B cell (primary cell): ENCODE measurements at regions of chr19 and their contacts with region 1.

Region 1: GRCh38 chr19:3746371-3747056 is 15.0 kb downstream of the APBA3 start:
- DNase-seq: no peak
- ATAC-seq: no peak
- H3K4me3 ChIP-seq: no peak overlapping the region
- H3K4me3 Mint-ChIP-seq: no peak overlapping the region
- H3K27ac ChIP-seq: no peak overlapping the region
- H3K27ac Mint-ChIP-seq: no peak overlapping the region
- H3K4me1 ChIP-seq: no peaks in the 10 kb centered on the region
- H3K4me1 Mint-ChIP-seq: no peaks in the 10 kb centered on the region
- H3K27me3 ChIP-seq: no peaks in the 10 kb centered on the region
- H3K27me3 Mint-ChIP-seq: no peaks in the 10 kb centered on the region
- CTCF ChIP-seq: no peak

Region 2: GRCh38 chr19:3193256-3194105 is 553.0 kb before region 1 on chr19:
- CTCF ChIA-PET with region 1: no interaction called
- POLR2A ChIA-PET with region 1: interaction called, 12 read pairs
- intact Hi-C with region 1: no loop called
- DNase-seq: no peak
- ATAC-seq: peak; percentile 28
- H3K4me3 ChIP-seq: no peak overlapping the region
- H3K4me3 Mint-ChIP-seq: no peak overlapping the region
- H3K27ac ChIP-seq: no peak overlapping the region
- H3K27ac Mint-ChIP-seq: no peak overlapping the region
- H3K4me1 ChIP-seq: peaks cover 6 to 19% of the 10 kb centered on the region in 2 donors
- H3K4me1 Mint-ChIP-seq: peaks cover 17% of the 10 kb centered on the region
- H3K27me3 ChIP-seq: no peaks in the 10 kb centered on the region
- H3K27me3 Mint-ChIP-seq: no peaks in the 10 kb centered on the region
- CTCF ChIP-seq: no peak

Region 3: DNA sequence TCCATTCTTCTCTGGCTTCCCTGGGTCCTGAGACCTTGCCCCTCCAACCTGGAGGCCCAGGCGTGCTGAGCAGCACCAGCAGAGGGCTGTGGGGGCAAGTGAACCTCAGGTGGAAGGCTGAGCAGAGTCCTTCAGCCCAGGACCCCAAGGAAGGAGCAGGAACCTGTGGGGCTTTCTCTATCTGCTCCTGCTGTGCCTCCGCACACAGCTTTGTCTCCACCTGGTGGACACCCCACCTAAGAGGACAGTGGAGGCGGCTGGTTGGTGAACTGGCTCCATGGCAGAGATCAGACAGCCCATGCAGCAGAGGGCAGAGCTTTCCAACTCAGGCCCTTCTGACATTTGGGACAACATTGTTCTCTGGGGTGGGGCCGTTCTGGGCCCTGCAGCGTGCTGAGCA is 102.6 kb after region 1 on chr19:
- CTCF ChIA-PET with region 1: no interaction called
- POLR2A ChIA-PET with region 1: no interaction called
- intact Hi-C with region 1: no loop called
- DNase-seq: peak; percentile 42
- ATAC-seq: no peak
- H3K4me3 ChIP-seq: no peak overlapping the region
- H3K4me3 Mint-ChIP-seq: no peak overlapping the region
- H3K27ac ChIP-seq: no peak overlapping the region
- H3K27ac Mint-ChIP-seq: no peak overlapping the region
- H3K4me1 ChIP-seq: peaks cover 0 to 8% of the 10 kb centered on the region in 2 donors
- H3K4me1 Mint-ChIP-seq: peaks cover 8% of the 10 kb centered on the region
- H3K27me3 ChIP-seq: no peaks in the 10 kb centered on the region
- H3K27me3 Mint-ChIP-seq: peaks cover 3% of the 10 kb centered on the region
- CTCF ChIP-seq: peak; percentile 15

Region 4: DNA sequence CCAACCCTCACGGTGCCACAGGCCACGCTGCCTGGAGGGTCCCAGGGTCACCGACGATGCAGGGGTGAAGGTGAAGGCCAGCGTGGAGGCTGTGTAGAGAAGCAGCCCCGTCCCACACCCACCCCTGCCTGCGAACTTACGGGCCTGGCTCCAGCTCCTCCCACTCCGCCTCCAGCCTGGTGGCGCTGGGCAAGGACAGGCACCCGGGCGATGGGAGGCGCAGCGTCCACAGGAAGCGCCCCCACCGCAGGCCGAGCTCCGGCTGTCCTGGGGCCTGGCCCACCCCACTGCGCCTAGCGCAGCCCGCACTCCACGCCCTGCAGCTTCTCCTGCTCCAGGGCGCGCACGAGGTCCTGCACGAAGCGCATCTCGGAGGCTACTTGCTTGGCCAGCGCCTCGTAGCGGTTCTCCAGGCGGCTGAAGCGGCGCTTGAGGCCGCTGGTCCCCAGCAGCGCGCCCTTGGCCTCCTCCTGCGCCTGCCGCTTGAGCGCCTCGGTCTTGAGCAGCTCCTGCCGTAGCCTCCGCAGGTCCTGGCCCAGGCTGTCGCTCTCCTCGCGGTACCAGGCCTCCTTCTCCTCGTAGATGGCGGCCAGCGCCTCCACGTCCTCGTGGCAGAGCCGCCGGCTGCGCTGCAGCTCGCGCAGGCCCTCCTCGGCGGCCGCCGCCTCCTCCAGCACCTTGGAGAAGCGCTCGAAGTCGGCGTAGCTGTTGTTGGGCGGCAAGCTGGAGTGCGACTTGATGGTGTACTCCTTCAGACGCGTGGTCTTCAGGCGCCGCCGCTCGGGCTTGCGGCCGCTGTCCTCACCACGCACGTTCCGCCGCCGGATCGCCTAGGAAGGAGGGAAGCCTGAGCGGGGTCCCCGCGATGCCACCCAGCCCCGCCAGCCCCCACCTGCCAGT is 212.5 kb after region 1 on chr19:
- CTCF ChIA-PET with region 1: no interaction called
- POLR2A ChIA-PET with region 1: interaction called, 11 read pairs
- intact Hi-C with region 1: no loop called
- DNase-seq: no peak
- ATAC-seq: no peak
- H3K4me3 ChIP-seq: no peak overlapping the region
- H3K4me3 Mint-ChIP-seq: no peak overlapping the region
- H3K27ac ChIP-seq: no peak overlapping the region
- H3K27ac Mint-ChIP-seq: no peak overlapping the region
- H3K4me1 ChIP-seq: no peaks in the 10 kb centered on the region
- H3K4me1 Mint-ChIP-seq: no peaks in the 10 kb centered on the region
- H3K27me3 ChIP-seq: no peaks in the 10 kb centered on the region
- H3K27me3 Mint-ChIP-seq: no peaks in the 10 kb centered on the region
- CTCF ChIP-seq: no peak